Endothelial cell of umbilical vein (primary cell): ENCODE measurements at regions of chr20 and their contacts with region 1.

Region 1: GRCh38 chr20:17530716-17531664 is at the start of gene BFSP1:
- DNase-seq: peak; percentile 72
- H3K4me3 ChIP-seq: peak within 1 kb of the TSS; percentile 16 to 47 (median 45)
- H3K27ac ChIP-seq: peak within 1 kb of the TSS; percentile 41
- H3K4me1 ChIP-seq: peaks cover 15% of the 10 kb centered on the region
- H3K27me3 ChIP-seq: no peaks in the 10 kb centered on the region
- CTCF ChIP-seq: no peak
- POLR2A ChIP-seq: peak; percentile 41
- total RNA-seq, gene BFSP1: 3.7 and 5.2 TPM in 2 replicates

Region 2: GRCh38 chr20:17497821-17498580 is 33.0 kb before region 1 on chr20:
- CTCF ChIA-PET with region 1: no interaction called
- POLR2A ChIA-PET with region 1: no interaction called
- dilution Hi-C with region 1: no loop called
- intact Hi-C with region 1: no loop called
- DNase-seq: peak; percentile 16
- H3K4me3 ChIP-seq: no peak overlapping the region
- H3K27ac ChIP-seq: no peak overlapping the region
- H3K4me1 ChIP-seq: no peaks in the 10 kb centered on the region
- H3K27me3 ChIP-seq: no peaks in the 10 kb centered on the region
- CTCF ChIP-seq: no peak
- POLR2A ChIP-seq: no peak

Region 3: DNA sequence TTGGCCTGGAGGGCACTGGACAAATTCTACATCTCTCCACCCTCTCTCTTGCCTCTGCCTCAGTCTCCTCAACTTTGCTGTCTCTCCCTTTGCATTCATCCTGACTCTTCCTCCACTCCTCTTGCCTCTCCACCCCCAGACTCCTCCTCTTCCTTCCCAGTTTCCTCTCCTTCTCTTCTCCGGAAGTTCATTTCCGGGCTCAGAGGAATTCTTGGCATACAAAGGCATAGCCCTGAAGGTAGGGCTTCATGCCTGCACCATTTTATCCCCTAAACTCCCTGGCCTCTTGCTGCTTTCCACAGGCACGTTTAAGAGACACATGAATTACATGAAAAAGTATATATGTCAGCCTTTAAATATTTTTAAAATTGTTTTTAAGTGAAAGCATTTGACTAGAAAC is 10.4 kb before region 1 on chr20:
- CTCF ChIA-PET with region 1: interaction called, 8 read pairs
- POLR2A ChIA-PET with region 1: interaction called, 3 read pairs
- dilution Hi-C with region 1: no loop called
- intact Hi-C with region 1: loop called (anchors 1 kb)
- DNase-seq: peak; percentile 53
- H3K4me3 ChIP-seq: no peak overlapping the region
- H3K27ac ChIP-seq: no peak overlapping the region
- H3K4me1 ChIP-seq: peaks cover 21% of the 10 kb centered on the region
- H3K27me3 ChIP-seq: no peaks in the 10 kb centered on the region
- CTCF ChIP-seq: no peak
- POLR2A ChIP-seq: no peak

Region 4: GRCh38 chr20:17611540-17612286 is 80.7 kb after region 1 on chr20:
- CTCF ChIA-PET with region 1: interaction called, 89 read pairs
- POLR2A ChIA-PET with region 1: no interaction called
- dilution Hi-C with region 1: no loop called
- intact Hi-C with region 1: loop called (anchors 1 kb)
- DNase-seq: no peak
- H3K4me3 ChIP-seq: no peak overlapping the region
- H3K27ac ChIP-seq: peak overlapping the region; percentile 15
- H3K4me1 ChIP-seq: no peaks in the 10 kb centered on the region
- H3K27me3 ChIP-seq: no peaks in the 10 kb centered on the region
- CTCF ChIP-seq: peak; percentile 28 to 49
- POLR2A ChIP-seq: no peak